Cardiac septum (tissue), 1 donor: ENCODE measurements at regions of chr10 and their contacts with region 1.

Region 1: GRCh38 chr10:4081685-4082111 is 296.7 kb upstream of the KLF6 start:
- DNase-seq: no peak

Region 2: GRCh38 chr10:3919709-3920308 is 161.9 kb before region 1 on chr10:
- intact Hi-C with region 1: loop called (anchors 5 kb)
- DNase-seq: no peak

Region 3: DNA sequence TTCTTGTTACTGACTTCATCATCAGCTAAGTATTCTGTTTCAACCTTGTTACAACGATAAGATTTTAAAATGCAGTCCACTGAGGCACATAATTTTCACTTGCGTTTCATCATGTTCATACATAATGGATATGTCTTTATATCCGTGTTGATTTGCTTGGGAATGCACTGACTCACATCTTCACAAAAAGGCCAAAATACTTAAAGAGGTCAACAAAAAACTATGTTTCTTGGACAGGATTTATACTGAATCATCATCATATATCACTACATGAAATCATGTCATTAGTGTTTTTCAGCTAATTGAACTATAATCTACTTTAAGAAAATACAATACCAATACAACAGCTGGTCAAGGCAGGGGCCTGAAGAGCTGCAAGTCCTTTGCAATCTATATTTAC is 27.8 kb after region 1 on chr10:
- intact Hi-C with region 1: loop called (anchors 2 kb)
- DNase-seq: no peak

Region 4: DNA sequence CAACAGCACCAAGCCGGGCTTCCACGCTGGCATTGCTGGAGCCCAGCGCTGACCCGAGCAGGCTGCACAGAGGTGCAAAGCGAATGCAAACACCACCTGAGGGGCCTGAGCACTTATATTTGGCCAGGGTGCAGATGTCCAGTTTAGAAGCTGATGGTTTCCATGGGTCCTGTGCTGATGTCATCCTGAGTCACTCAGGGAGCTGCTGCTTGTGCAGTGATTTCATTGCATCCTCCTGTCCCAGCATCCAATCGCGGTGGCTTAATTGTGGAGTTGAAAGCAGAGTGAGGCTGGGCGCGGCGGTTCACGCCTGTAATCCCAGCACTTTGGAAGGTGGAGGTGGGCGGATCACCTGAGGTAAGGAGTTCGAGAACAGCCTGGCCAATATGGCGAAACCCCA is 113.5 kb after region 1 on chr10:
- intact Hi-C with region 1: loop called (anchors 5 kb)
- DNase-seq: no peak

Region 5: DNA sequence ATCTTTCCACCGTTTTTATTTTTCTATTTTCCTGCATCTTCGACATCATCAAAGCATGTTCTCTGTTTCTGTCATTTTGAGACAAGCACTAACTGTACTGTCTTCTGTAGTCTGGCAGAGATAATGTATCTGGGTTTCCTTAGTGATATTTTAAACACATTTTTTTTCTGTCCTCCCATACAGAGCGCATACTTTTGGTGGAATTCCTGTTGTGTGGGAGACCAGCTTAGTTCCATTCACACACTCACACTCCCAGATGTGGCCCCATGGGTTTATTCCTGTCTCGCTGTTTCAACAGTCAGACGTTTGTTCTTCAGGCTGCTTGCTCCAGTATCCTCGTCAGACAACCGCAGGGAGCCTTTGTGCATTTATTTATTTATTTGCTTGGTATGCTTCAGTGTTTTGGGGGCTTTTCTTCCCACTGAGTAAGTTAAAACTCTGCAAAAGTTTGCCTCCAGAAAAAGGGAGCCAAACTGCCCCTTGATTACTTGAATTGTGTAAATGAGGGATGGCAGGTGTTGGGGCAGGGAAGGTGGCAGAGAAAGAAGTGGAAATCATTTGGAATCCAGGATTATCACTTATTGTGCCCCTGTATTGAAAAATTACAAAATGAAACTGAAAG is 160.1 kb after region 1 on chr10:
- intact Hi-C with region 1: loop called (anchors 1 kb)
- DNase-seq: no peak

Region 6: GRCh38 chr10:4512671-4513240 is 431.1 kb after region 1 on chr10:
- intact Hi-C with region 1: loop called (anchors 10 kb)
- DNase-seq: peak; percentile 78

Region 7: GRCh38 chr10:4649886-4650508 is 568.3 kb after region 1 on chr10:
- intact Hi-C with region 1: loop called (anchors 5 kb)
- DNase-seq: no peak